Activated naive CD4-positive, alpha-beta T cell treated with anti-CD3 and anti-CD28 coated beads for 36 hours (primary cell): ENCODE measurements at regions of chr14 and their contacts with region 1.

Region 1: GRCh38 chr14:50396631-50397390 is at the start of gene CDKL1:
- DNase-seq: peak; percentile 53
- H3K4me3 Mint-ChIP-seq: peak within 1 kb of the TSS; percentile 83
- H3K27ac Mint-ChIP-seq: peak within 1 kb of the TSS; percentile 59
- H3K4me1 Mint-ChIP-seq: peaks cover 13% of the 10 kb centered on the region
- H3K27me3 Mint-ChIP-seq: peaks cover 2% of the 10 kb centered on the region
- total RNA-seq, gene CDKL1: 1.5 to 2.0 TPM

Region 2: DNA sequence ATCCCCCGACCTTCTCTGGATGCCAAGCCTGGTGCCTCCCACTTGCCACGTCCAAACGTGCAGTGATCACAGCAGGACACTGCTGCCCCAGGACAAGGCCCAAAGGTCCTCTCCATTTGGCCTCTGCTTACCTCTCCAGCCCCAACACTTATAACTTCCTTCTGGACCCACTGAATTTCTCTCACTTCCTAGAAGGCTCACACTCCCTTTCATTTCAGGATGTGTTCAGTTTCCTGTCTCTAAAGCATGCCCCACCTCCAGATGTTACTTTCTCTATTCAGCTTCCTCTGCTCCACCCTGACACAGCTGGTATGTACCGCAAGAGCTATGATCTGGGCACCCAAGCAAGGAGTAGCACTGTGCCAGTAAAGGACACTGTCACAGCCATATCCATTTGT is 33.1 kb before region 1 on chr14:
- CTCF ChIA-PET with region 1: no interaction called
- intact Hi-C with region 1: loop called (anchors 1 kb)
- DNase-seq: peak; percentile 74
- H3K4me3 Mint-ChIP-seq: peak overlapping the region; percentile 73
- H3K27ac Mint-ChIP-seq: peak overlapping the region; percentile 84
- H3K4me1 Mint-ChIP-seq: peaks cover 18% of the 10 kb centered on the region
- H3K27me3 Mint-ChIP-seq: no peaks in the 10 kb centered on the region

Region 3: DNA sequence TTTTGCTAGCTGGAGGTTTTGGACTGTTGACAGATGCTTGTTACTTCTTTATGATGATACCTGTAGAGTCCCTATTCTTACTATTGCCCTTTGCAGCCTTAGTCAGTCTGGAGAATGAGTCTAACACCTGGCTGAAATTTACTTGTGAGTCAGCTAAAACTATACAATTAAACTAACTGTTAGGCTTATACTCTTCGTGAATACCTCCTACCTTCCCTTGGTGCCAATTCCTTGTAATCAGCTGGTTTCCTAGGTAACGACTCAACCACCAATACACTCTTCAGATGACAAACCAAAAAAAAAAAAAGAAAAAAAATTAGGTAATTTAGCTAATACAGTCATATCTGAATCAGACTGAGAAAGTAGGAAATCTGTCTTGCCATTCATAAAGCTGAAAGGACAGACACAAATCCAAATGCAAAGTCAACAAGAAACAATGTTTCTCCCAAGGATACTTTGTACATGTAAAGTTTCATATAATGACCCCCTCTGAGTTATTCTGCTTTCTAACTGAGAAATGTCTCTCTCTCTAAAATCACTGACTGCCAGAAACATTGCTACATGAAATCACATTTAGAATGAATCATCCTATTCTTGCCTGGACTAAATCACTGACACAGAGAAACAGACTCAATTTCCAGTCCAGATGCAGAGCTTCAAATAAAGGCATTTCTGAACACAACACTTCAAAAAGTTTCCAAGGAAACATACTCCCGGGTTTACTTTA is 56.3 kb after region 1 on chr14:
- CTCF ChIA-PET with region 1: no interaction called
- intact Hi-C with region 1: loop called (anchors 2 kb)
- DNase-seq: no peak
- H3K4me3 Mint-ChIP-seq: no peak overlapping the region
- H3K27ac Mint-ChIP-seq: no peak overlapping the region
- H3K4me1 Mint-ChIP-seq: peaks cover 12% of the 10 kb centered on the region
- H3K27me3 Mint-ChIP-seq: no peaks in the 10 kb centered on the region

Region 4: DNA sequence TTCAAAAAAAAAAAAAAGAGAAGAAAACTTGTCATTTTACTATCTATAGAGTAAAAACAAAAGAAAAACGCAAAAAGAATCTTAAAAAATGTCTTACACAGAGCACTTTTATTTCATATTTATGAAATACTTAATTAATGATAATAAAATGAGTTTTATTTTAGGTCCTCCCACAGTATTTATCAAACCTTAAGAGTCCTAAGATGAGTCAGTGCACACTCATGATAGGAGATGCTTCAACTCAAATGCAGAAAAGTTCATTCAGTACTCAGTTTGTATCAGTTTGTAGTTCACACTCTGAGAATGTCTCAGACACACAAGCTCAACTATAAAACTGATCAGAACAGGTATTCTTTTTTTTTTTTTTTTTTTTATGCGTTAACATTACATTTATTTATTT is 656.3 kb after region 1 on chr14:
- CTCF ChIA-PET with region 1: no interaction called
- intact Hi-C with region 1: no loop called
- DNase-seq: no peak
- H3K4me3 Mint-ChIP-seq: no peak overlapping the region
- H3K27ac Mint-ChIP-seq: no peak overlapping the region
- H3K4me1 Mint-ChIP-seq: no peaks in the 10 kb centered on the region
- H3K27me3 Mint-ChIP-seq: no peaks in the 10 kb centered on the region